ENCODE measurements at regions of chr5 and their contacts with region 1.

Region 1: GRCh38 chr5:96198356-96199058 is 234.5 kb downstream of the PCSK1 start:
- DNase-seq: no peak
- H3K4me3 ChIP-seq: no peak overlapping the region
- H3K27ac ChIP-seq: no peak overlapping the region
- H3K4me1 ChIP-seq: no peaks in the 10 kb centered on the region
- H3K27me3 ChIP-seq: no peaks in the 10 kb centered on the region
- CTCF ChIP-seq: no peak

Region 2: DNA sequence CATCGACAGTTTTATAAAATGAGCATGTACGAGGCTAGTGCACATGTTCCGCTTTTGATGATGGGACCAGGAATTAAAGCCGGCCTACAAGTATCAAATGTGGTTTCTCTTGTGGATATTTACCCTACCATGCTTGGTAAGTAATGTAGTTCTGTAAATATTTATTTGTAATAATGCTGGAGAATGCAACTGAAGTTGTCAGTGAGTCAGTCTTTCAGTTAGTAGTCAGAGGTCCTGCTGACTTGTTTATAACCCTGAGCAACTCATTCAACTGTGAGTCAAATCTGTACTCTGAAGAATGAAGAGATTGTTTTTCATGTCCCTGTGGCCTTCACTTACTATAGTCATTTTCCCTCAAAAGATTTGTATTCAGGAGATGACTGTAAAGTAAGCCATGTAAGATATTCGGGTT is 607.0 kb before region 1 on chr5:
- CTCF ChIA-PET with region 1: no interaction called
- POLR2A ChIA-PET with region 1: no interaction called
- intact Hi-C with region 1: no loop called
- DNase-seq: peak in 1 of 2 experiments; percentile 34
- H3K4me3 ChIP-seq: no peak overlapping the region
- H3K27ac ChIP-seq: no peak overlapping the region
- H3K4me1 ChIP-seq: 0 out of 2 replicates have a peak, but pooled peaks cover 4% of the 10 kb centered on the region
- H3K27me3 ChIP-seq: no peaks in the 10 kb centered on the region
- CTCF ChIP-seq: no peak

Region 3: GRCh38 chr5:96324708-96325107 is 126.2 kb after region 1 on chr5:
- CTCF ChIA-PET with region 1: interaction called, 10 read pairs
- POLR2A ChIA-PET with region 1: no interaction called
- intact Hi-C with region 1: no loop called
- DNase-seq: peak; percentile 36 to 87
- H3K4me3 ChIP-seq: no peak overlapping the region
- H3K27ac ChIP-seq: peak overlapping the region; percentile 57; the same call in 1 of the 2 replicates
- H3K4me1 ChIP-seq: peaks cover 28% of the 10 kb centered on the region
- H3K27me3 ChIP-seq: no peaks in the 10 kb centered on the region
- CTCF ChIP-seq: no peak